Activated CD4-positive, alpha-beta T cell treated with anti-CD3 and anti-CD28 coated beads, Interleukin-2, amount 10 ng/mL, durations not matched to agents 7 days and 5 days (primary cell): ENCODE measurements at regions of chr7 and their contacts with region 1.

Region 1: DNA sequence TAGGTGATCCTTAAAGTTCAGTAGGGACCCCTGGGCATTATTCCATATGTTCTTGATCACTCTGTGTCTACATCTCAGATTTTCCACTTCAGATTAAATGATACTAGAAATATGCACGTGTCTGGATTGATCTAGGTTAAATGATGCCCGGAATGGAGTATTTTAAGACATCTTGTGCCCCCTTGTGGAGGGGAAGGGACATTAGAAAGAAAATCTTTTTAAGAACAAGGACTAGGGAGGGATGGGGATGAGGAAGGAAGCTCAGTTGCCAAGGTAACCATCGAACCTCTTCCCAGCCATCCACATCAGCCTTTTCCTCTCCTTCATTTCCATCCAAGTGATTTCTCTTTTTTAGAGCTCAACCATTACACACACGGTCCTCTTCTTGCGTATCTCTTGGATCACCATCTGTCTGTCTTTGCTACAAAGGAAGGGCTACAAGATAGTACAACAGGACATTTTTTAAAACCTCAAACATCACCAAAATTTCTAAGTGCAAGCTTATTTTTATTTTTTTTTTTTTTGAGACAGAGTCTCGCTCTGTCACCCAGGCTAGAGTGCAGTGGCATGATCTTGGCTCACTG is 40.5 kb downstream of the PRSS2 start:
- DNase-seq: peak; percentile 74
- H3K4me3 Mint-ChIP-seq: peak overlapping the region; percentile 54
- H3K27ac Mint-ChIP-seq: peak overlapping the region; percentile 88
- H3K4me1 Mint-ChIP-seq: peaks cover 81% of the 10 kb centered on the region
- H3K27me3 Mint-ChIP-seq: peaks cover 3% of the 10 kb centered on the region

Region 2: GRCh38 chr7:142535123-142535779 is 276.0 kb before region 1 on chr7:
- CTCF ChIA-PET with region 1: interaction called, 11 read pairs
- POLR2A ChIA-PET with region 1: interaction called, 7 read pairs
- DNase-seq: peak; percentile 81
- H3K4me3 Mint-ChIP-seq: peak overlapping the region; percentile 56
- H3K27ac Mint-ChIP-seq: peak overlapping the region; percentile 76
- H3K4me1 Mint-ChIP-seq: peaks cover 33% of the 10 kb centered on the region
- H3K27me3 Mint-ChIP-seq: peaks cover 9% of the 10 kb centered on the region

Region 3: GRCh38 chr7:142711746-142712619 is 99.3 kb before region 1 on chr7:
- CTCF ChIA-PET with region 1: interaction called, 12 read pairs
- POLR2A ChIA-PET with region 1: interaction called, 3 read pairs
- DNase-seq: peak; percentile 36
- H3K4me3 Mint-ChIP-seq: peak overlapping the region; percentile 66
- H3K27ac Mint-ChIP-seq: peak overlapping the region; percentile 90
- H3K4me1 Mint-ChIP-seq: peaks cover 79% of the 10 kb centered on the region
- H3K27me3 Mint-ChIP-seq: no peaks in the 10 kb centered on the region

Region 4: DNA sequence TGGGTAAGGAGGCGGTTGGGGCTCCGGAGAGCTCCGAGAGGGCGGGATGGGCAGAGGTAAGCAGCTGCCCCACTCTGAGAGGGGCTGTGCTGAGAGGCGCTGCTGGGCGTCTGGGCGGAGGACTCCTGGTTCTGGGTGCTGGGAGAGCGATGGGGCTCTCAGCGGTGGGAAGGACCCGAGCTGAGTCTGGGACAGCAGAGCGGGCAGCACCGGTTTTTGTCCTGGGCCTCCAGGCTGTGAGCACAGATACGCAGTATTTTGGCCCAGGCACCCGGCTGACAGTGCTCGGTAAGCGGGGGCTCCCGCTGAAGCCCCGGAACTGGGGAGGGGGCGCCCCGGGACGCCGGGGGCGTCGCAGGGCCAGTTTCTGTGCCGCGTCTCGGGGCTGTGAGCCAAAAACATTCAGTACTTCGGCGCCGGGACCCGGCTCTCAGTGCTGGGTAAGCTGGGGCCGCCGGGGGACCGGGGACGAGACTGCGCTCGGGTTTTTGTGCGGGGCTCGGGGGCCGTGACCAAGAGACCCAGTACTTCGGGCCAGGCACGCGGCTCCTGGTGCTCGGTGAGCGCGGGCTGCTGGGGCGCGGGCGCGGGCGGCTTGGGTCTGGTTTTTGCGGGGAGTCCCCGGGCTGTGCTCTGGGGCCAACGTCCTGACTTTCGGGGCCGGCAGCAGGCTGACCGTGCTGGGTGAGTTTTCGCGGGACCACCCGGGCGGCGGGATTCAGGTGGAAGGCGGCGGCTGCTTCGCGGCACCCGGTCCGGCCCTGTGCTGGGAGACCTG is 14.4 kb before region 1 on chr7:
- CTCF ChIA-PET with region 1: interaction called, 176 read pairs
- POLR2A ChIA-PET with region 1: interaction called, 143 read pairs
- DNase-seq: no peak
- H3K4me3 Mint-ChIP-seq: peak overlapping the region; percentile 100
- H3K27ac Mint-ChIP-seq: peak overlapping the region; percentile 100
- H3K4me1 Mint-ChIP-seq: peaks cover 64% of the 10 kb centered on the region
- H3K27me3 Mint-ChIP-seq: no peaks in the 10 kb centered on the region